Activated naive CD4-positive, alpha-beta T cell treated with anti-CD3 and anti-CD28 coated beads, Interleukin-2, amount 10 ng/mL, durations not matched to agents 7 days and 5 days (primary cell): ENCODE measurements at regions of chr16 and their contacts with region 1.

Region 1: DNA sequence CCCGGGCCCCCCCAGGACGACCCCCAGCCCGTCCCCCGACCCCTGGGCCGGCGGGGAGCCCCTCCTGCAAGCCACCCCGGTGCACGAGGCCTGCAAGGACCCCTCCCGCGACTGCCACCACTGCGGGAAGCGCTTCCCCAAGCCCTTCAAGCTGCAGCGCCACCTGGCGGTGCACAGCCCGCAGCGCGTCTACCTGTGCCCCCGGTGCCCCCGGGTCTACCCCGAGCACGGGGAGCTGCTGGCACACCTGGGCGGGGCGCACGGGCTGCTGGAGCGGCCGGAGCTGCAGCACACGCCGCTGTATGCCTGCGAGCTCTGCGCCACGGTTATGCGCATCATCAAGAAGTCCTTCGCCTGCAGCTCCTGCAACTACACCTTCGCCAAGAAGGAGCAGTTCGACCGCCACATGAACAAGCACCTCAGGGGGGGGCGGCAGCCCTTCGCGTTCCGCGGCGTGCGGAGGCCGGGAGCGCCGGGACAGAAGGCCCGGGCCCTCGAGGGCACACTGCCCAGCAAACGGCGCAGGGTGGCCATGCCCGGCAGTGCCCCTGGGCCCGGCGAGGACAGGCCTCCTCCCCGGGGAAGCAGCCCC is 15.6 kb upstream of the ZFPM1 start:
- DNase-seq: peak; percentile 76
- H3K4me3 Mint-ChIP-seq: no peak overlapping the region
- H3K27ac Mint-ChIP-seq: no peak overlapping the region
- H3K4me1 Mint-ChIP-seq: no peaks in the 10 kb centered on the region
- H3K27me3 Mint-ChIP-seq: peaks cover 4% of the 10 kb centered on the region

Region 2: DNA sequence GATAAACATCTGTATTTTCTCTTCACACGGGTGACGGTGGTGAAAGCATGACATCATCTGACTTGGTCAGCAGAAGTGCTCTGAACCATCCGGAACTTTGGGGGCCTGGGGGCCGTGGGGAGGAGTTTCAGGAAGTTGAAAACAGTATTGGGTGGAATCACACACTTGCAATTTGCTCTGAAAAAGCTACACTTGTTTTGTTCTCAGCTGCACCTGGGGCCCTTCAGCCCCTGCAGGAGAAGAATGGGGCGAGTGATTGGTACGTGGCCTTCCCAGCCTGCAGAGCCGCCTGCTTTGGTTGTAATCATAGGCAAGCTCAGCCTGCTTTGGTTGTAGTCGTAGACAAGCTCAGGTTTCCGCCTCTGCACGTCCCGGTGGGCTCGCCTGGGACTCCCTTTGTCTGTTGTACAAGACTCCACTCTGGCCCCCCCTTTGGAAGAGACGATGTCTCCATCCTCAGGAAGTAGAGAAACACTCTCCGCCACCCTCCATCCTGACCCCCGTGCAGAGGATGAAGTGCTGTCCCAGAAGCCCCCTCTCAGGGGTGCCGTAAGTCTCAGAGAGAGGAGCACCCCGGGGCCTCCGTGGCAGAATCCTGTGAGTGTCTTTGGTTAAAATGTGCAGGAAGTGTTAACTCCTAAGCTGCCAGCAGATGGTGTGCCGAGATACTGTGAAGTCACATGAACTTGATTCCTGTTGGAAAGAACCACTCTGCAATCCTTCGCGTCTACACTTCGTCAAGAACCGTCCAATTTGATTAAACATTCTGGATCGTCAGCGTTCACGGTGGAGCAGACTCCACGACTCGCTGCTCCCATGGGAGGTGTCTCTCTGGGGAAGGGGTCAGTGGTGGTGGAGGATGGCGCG is 480.9 kb before region 1 on chr16:
- CTCF ChIA-PET with region 1: interaction called, 13 read pairs
- DNase-seq: peak; percentile 87
- H3K4me3 Mint-ChIP-seq: peak overlapping the region; percentile 76
- H3K27ac Mint-ChIP-seq: peak overlapping the region; percentile 98
- H3K4me1 Mint-ChIP-seq: peaks cover 91% of the 10 kb centered on the region
- H3K27me3 Mint-ChIP-seq: no peaks in the 10 kb centered on the region

Region 3: GRCh38 chr16:88561485-88562369 is 124.3 kb after region 1 on chr16:
- CTCF ChIA-PET with region 1: interaction called, 33 read pairs
- DNase-seq: peak; percentile 59
- H3K4me3 Mint-ChIP-seq: no peak overlapping the region
- H3K27ac Mint-ChIP-seq: no peak overlapping the region
- H3K4me1 Mint-ChIP-seq: peaks cover 12% of the 10 kb centered on the region
- H3K27me3 Mint-ChIP-seq: peaks cover 23% of the 10 kb centered on the region